ENCODE measurements at regions of chr11 and their contacts with region 1.

Region 1: GRCh38 chr11:66438504-66439466 is at the start of gene MRPL11:
- DNase-seq: peak; percentile 74 to 93 (median 90)
- ATAC-seq: peak; percentile 100
- H3K4me3 ChIP-seq: peak within 1 kb of the TSS; percentile 86
- H3K4me3 Mint-ChIP-seq: peak within 1 kb of the TSS; percentile 83 to 96 (median 90)
- H3K27ac ChIP-seq: peak within 1 kb of the TSS; percentile 84
- H3K27ac Mint-ChIP-seq: peak within 1 kb of the TSS; percentile 84 to 99 (median 94)
- H3K4me1 ChIP-seq: peaks cover 4 to 5% of the 10 kb centered on the region in 2 donors
- H3K4me1 Mint-ChIP-seq: peaks cover 7 to 13% (median 11%) of the 10 kb centered on the region in 7 donors
- H3K27me3 ChIP-seq: no peaks in the 10 kb centered on the region
- H3K27me3 Mint-ChIP-seq: peaks cover 0 to 7% (median 0%) of the 10 kb centered on the region in 5 donors
- total RNA-seq, gene MRPL11: 23.5 to 64.1 (median 24.0) TPM

Region 2: GRCh38 chr11:65003282-65003681 is 1435.5 kb before region 1 on chr11:
- CTCF ChIA-PET with region 1: no interaction called
- POLR2A ChIA-PET with region 1: no interaction called
- intact Hi-C with region 1: no loop called
- DNase-seq: no peak
- ATAC-seq: no peak
- H3K4me3 ChIP-seq: no peak overlapping the region
- H3K4me3 Mint-ChIP-seq: no peak overlapping the region
- H3K27ac ChIP-seq: no peak overlapping the region
- H3K27ac Mint-ChIP-seq: no peak overlapping the region
- H3K4me1 ChIP-seq: no peaks in the 10 kb centered on the region
- H3K4me1 Mint-ChIP-seq: peaks cover 0 to 7% (median 6%) of the 10 kb centered on the region in 7 donors
- H3K27me3 ChIP-seq: no peaks in the 10 kb centered on the region
- H3K27me3 Mint-ChIP-seq: no peaks in the 10 kb centered on the region

Region 3: GRCh38 chr11:66243782-66244535 is 194.8 kb before region 1 on chr11:
- CTCF ChIA-PET with region 1: no interaction called
- POLR2A ChIA-PET with region 1: no interaction called
- intact Hi-C with region 1: no loop called
- DNase-seq: no peak
- ATAC-seq: no peak
- H3K4me3 ChIP-seq: no peak overlapping the region
- H3K4me3 Mint-ChIP-seq: peak overlapping the region in 2 of 10 donors; percentile 25 to 39
- H3K27ac ChIP-seq: peak overlapping the region; percentile 36
- H3K27ac Mint-ChIP-seq: peak overlapping the region in 7 of 9 donors; percentile 22 to 78 (median 55)
- H3K4me1 ChIP-seq: no peaks in the 10 kb centered on the region
- H3K4me1 Mint-ChIP-seq: peaks cover 0 to 18% (median 4%) of the 10 kb centered on the region in 7 donors
- H3K27me3 ChIP-seq: no peaks in the 10 kb centered on the region
- H3K27me3 Mint-ChIP-seq: no peaks in the 10 kb centered on the region

Region 4: GRCh38 chr11:66277471-66278362 is 161.1 kb before region 1 on chr11 and contains the start of gene CNIH2:
- CTCF ChIA-PET with region 1: no interaction called
- POLR2A ChIA-PET with region 1: no interaction called
- intact Hi-C with region 1: no loop called
- DNase-seq: peak in 7 of 9 donors; percentile 37 to 71 (median 51)
- ATAC-seq: peak; percentile 44
- H3K4me3 ChIP-seq: no peak within 1 kb of the TSS
- H3K4me3 Mint-ChIP-seq: peak within 1 kb of the TSS in 9 of 10 donors; percentile 47 to 81 (median 66)
- H3K27ac ChIP-seq: peak within 1 kb of the TSS; percentile 50
- H3K27ac Mint-ChIP-seq: peak within 1 kb of the TSS in 4 of 9 donors; percentile 37 to 80 (median 50)
- H3K4me1 ChIP-seq: peaks cover 20 to 24% of the 10 kb centered on the region in 2 donors
- H3K4me1 Mint-ChIP-seq: peaks cover 20 to 46% (median 29%) of the 10 kb centered on the region in 7 donors
- H3K27me3 ChIP-seq: no peaks in the 10 kb centered on the region
- H3K27me3 Mint-ChIP-seq: peaks cover 0 to 14% (median 0%) of the 10 kb centered on the region in 5 donors
- total RNA-seq, gene CNIH2: 1.3 to 12.3 (median 2.9) TPM

Region 5: GRCh38 chr11:66288671-66289547 is 149.9 kb before region 1 on chr11 and contains the start of gene YIF1A:
- CTCF ChIA-PET with region 1: no interaction called
- POLR2A ChIA-PET with region 1: no interaction called
- intact Hi-C with region 1: loop called in 1 of 2 experiments (anchors 1 kb)
- DNase-seq: peak; percentile 92 to 99 (median 99)
- ATAC-seq: peak; percentile 96
- H3K4me3 ChIP-seq: peak within 1 kb of the TSS; percentile 99
- H3K4me3 Mint-ChIP-seq: peak within 1 kb of the TSS; percentile 86 to 96 (median 90)
- H3K27ac ChIP-seq: peak within 1 kb of the TSS; percentile 76
- H3K27ac Mint-ChIP-seq: peak within 1 kb of the TSS; percentile 74 to 97 (median 92)
- H3K4me1 ChIP-seq: peaks cover 18 to 19% of the 10 kb centered on the region in 2 donors
- H3K4me1 Mint-ChIP-seq: peaks cover 17 to 46% (median 37%) of the 10 kb centered on the region in 7 donors
- H3K27me3 ChIP-seq: peaks cover 0 to 7% of the 10 kb centered on the region in 2 donors
- H3K27me3 Mint-ChIP-seq: peaks cover 13 to 35% (median 13%) of the 10 kb centered on the region in 5 donors
- total RNA-seq, gene YIF1A: 25.0 to 66.2 (median 33.3) TPM

Region 6: GRCh38 chr11:66408488-66409214 is 30.1 kb before region 1 on chr11:
- CTCF ChIA-PET with region 1: interaction called, 11 read pairs
- POLR2A ChIA-PET with region 1: interaction called, 3 read pairs
- intact Hi-C with region 1: loop called (anchors 1 to 2 kb)
- DNase-seq: peak; percentile 81 to 98 (median 88)
- ATAC-seq: peak; percentile 98
- H3K4me3 ChIP-seq: peak overlapping the region; percentile 51
- H3K4me3 Mint-ChIP-seq: peak overlapping the region; percentile 42 to 86 (median 84)
- H3K27ac ChIP-seq: no peak overlapping the region
- H3K27ac Mint-ChIP-seq: peak overlapping the region in 3 of 9 donors; percentile 4 to 75 (median 20)
- H3K4me1 ChIP-seq: peaks cover 4 to 5% of the 10 kb centered on the region in 2 donors
- H3K4me1 Mint-ChIP-seq: peaks cover 0 to 5% (median 4%) of the 10 kb centered on the region in 7 donors
- H3K27me3 ChIP-seq: no peaks in the 10 kb centered on the region
- H3K27me3 Mint-ChIP-seq: peaks cover 17 to 35% (median 28%) of the 10 kb centered on the region in 5 donors

Region 7: DNA sequence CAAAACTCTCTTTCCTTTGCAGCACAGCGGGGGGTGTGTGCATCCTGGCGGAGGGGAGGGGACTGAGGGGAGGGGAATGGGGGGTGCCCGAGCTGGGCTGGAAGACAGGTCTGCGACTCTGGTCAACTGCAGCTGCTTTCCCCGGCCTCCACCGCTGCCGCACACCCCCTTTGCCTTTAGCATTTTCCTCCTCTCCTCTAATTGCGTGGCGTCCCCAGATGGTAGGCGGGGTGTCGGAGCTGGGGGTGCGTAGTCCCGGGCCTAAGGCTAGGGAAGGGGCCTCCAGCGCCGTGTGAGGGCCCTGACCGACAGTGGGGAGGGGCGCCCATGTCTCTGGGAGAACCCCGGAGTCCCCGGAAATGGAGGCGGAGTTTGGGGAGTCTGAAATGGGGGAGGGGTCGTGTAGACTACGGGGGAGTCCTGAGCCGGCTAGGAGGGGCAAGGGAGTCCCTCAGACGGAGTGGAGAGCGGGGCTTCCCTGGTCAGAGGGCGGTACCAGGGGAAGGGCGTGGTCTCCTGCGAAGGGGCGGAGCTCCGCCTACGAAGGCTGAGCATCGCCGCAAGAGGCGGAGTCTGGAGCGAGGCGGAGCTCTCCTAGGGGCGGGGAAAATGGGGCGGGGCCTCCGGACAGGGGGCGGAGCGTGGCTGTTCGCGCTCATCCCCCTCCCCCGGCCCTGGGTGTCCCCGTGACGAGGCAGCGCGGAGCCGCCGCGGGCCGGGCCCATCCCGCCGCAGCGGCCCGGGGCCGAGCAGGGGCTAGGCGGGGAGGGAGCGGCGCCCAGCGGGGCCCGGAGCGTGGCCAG is 27.6 kb after region 1 on chr11 and contains the start of gene PELI3:
- CTCF ChIA-PET with region 1: interaction called, 3 read pairs
- POLR2A ChIA-PET with region 1: interaction called, 10 read pairs
- intact Hi-C with region 1: loop called (anchors 1 kb)
- DNase-seq: peak; percentile 86 to 95 (median 92)
- ATAC-seq: peak; percentile 97
- H3K4me3 ChIP-seq: peak within 1 kb of the TSS; percentile 78
- H3K4me3 Mint-ChIP-seq: peak within 1 kb of the TSS; percentile 89 to 96 (median 90)
- H3K27ac ChIP-seq: peak within 1 kb of the TSS; percentile 87
- H3K27ac Mint-ChIP-seq: peak within 1 kb of the TSS; percentile 87 to 97 (median 93)
- H3K4me1 ChIP-seq: peaks cover 8 to 10% of the 10 kb centered on the region in 2 donors
- H3K4me1 Mint-ChIP-seq: peaks cover 4 to 39% (median 24%) of the 10 kb centered on the region in 7 donors
- H3K27me3 ChIP-seq: no peaks in the 10 kb centered on the region
- H3K27me3 Mint-ChIP-seq: no peaks in the 10 kb centered on the region
- total RNA-seq, gene PELI3: 10.6 to 27.3 (median 18.6) TPM

Region 8: DNA sequence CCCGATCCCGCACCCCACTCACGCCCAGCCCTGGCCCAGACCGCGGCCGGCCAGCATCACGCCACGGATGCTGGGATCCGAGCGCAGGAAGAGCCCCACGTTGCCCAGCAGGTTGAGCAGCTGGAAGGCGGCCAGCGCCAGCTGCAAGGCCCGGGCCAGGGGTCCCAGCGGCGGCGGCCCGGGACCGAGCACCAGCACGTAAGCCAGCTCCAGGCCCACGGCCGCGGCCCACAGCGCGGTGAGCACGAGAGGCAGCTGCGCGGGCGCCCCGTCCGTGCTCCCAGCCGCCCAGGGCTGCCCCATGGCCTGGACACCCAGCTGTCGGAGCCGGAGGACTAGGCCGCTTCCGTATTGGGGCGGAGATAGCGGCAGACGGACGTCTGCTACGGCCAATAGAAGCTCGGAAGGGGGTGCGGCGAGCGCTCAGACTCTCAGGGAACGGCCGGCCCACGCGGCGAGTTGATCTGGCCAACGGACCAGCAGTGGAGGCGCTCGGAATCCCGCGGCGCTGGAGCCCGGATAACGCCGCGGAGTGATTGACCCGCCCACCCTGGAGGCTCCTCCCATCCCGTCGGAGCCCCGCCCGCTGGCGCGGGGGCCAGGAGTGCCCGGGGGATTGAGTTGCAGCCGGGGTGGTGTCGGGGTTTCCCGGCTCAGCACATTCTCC is 107.0 kb after region 1 on chr11 and contains the start of gene ZDHHC24:
- CTCF ChIA-PET with region 1: interaction called, 3 read pairs
- POLR2A ChIA-PET with region 1: interaction called, 4 read pairs
- intact Hi-C with region 1: loop called in 1 of 2 experiments (anchors 1 kb)
- DNase-seq: peak; percentile 60 to 94 (median 74)
- ATAC-seq: peak; percentile 86
- H3K4me3 ChIP-seq: peak within 1 kb of the TSS; percentile 78
- H3K4me3 Mint-ChIP-seq: peak within 1 kb of the TSS; percentile 79 to 92 (median 88)
- H3K27ac ChIP-seq: peak within 1 kb of the TSS; percentile 90
- H3K27ac Mint-ChIP-seq: peak within 1 kb of the TSS; percentile 67 to 95 (median 89)
- H3K4me1 ChIP-seq: peaks cover 19 to 21% of the 10 kb centered on the region in 2 donors
- H3K4me1 Mint-ChIP-seq: peaks cover 13 to 46% (median 33%) of the 10 kb centered on the region in 7 donors
- H3K27me3 ChIP-seq: no peaks in the 10 kb centered on the region
- H3K27me3 Mint-ChIP-seq: peaks cover 0 to 16% (median 0%) of the 10 kb centered on the region in 5 donors
- total RNA-seq, gene ZDHHC24: 14.5 to 24.5 (median 19.2) TPM